Left ventricle myocardium superior (tissue), 1 donor: ENCODE measurements at regions of chr1 and their contacts with region 1.

Region 1: DNA sequence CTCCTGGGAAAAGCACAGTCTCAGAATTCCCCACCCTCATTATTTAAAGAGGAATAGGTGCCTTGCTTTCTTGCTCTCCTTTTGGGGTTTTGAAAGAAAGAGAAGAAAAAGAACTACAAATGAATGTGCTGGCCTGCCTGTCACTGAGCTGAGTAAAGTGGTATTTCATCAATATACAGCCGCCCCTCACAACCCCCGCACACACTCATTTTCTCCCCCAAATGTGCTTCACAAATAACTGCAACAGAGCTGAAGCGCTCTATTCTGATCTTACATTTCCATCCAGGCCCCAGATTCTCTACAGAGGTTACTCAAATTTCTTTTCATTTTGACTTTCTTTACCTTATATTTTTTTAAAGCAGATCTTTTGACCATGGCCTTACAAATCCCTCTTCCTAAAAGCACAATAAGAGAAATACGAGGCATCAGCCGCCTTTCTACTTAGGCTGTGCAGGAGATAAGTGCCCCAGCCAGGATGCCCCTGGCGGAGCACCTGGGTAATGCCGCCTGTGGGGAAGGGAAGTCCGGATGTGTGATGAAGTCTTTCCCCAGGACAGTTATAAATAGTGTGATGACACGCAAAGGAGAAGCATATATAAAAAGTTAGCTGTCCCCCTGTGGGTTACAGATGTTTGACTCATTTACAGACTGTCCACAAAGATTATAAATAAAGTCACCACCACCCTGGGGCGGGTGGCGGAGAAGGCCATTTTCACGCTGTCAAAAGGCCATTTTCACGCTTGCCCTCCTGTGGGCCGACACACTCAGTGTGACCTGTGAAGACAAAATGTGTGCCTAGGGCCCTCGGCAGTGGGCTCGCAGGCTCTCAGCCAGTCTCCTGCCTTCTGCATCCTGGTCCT is 6.5 kb downstream of the KCNN3 start:
- DNase-seq: peak; percentile 54
- ATAC-seq: peak; percentile 42

Region 2: GRCh38 chr1:154483941-154484803 is 379.4 kb before region 1 on chr1:
- intact Hi-C with region 1: no loop called
- DNase-seq: no peak
- ATAC-seq: peak; percentile 39

Region 3: DNA sequence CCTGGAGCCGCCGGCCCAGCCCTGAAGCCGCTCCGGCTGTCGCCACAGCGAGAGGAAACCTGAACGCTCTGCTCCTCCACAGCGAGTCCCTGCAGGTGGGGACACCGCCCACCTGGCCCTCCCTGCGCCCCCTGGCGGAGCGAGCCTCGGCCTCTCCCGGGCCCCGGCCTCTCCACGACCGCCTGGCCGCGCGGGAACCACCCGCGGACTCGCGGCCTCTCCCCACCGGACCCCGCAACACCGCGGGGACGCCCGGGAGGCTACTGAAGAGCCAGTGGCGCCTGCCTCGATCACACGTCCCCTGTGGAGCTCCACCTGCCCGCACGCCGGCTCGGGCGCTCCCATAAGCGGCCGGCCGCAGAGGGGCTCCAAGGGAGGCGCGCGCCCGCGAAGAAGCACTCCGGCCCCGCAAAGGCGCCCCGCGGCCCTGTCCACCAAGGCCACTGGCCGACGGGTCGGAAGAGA is 103.0 kb before region 1 on chr1:
- intact Hi-C with region 1: loop called (anchors 10 kb)
- DNase-seq: peak; percentile 85
- ATAC-seq: peak; percentile 93